ENCODE measurements at regions of chr21 and their contacts with region 1.

Region 1: GRCh38 chr21:33019885-33020557 is 5.7 kb upstream of the OLIG2 start:
- DNase-seq: peak in 2 of 42 donors; percentile 18 to 32

Region 2: DNA sequence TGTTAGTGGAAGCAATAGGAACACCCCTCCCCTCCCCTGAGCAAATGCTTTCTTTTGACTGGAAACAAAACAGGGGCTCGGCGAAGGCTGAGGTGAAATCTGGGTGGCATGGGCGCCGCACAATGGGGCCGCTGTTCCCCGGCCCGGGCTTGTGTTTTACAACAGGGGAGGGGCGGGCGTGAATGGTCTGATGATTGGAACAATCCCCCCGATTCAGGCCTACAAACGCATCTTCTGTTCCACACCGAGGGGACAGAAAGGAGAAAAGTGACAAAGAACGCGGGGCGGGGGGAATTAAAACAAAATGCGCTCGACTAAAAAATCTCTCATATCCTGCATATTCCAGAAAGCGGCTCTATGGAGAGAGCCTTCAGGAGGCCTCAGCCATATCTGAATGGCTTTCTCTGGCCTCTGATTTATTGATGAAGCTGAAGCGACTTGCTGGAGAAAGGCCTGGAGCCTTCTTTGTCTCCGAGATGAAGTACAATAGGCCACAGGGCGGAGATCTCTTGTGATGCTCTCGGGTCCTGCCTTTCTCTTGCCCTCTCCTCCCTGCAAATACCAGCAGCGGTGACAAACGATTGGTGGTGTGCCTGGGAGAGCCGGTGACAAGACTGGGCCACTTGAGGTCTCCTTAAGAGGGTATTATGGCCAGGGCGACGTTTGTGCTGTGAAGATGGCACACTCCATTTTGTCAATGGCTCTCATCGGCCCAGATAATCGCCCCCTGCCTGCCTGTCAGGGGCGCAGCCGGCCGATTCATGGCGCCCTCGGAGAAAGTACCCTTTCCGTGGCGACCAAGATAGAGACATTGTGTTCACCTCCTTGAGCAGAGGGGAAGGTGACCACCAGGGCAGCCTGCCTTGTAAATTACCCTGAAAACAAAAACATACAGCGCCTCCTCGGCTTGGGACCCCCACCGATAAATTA is 41.4 kb before region 1 on chr21:
- intact Hi-C with region 1: loop called (anchors 5 kb)
- DNase-seq: peak; percentile 71 to 94 (median 86)

Region 3: DNA sequence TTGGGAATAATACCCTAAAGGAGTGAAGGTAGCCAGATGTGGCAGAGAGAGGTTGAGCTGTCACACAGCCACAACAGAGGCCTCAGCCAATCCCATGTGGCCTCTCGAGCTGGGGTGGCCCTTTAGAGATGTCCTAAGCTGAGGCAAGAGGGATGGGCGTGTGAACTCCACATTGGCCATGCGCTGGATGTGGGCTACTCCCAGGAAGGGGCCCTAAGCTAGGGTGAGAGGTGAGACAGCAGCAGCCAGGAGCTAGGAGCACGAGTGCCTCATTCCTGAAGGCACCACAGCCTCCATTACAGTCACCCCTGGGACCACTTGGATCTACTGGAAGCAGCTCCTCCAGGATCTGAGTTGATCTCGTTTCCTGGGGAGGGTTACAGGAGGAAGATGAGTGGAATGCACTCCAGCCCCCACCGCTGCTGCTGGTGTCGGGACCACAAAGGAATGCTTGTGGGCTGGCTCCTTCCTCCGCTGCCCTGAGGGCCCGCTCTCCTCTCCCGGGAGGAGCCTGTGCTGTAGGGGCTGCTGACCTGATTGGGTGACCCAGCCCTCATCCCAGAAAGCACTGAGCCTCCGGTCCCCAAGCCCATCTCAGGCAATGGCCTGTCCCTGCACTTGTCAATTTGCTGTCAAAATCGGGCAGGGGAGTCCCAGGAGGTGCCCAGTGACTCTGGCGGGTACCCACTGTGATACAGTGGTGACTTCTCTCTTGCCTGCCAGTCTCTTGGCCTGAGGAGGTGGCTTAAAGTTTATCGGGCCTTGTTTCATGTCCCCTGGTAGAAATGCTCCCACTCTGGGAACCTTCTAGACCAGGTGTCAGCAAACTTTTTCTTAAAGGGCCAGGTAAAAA is 269.2 kb after region 1 on chr21:
- intact Hi-C with region 1: no loop called
- DNase-seq: no peak

Measured in head of caudate nucleus (tissue), 42 donors.